CD8-positive, alpha-beta T cell (primary cell): ENCODE measurements at regions of chr7 and their contacts with region 1.

Region 1: DNA sequence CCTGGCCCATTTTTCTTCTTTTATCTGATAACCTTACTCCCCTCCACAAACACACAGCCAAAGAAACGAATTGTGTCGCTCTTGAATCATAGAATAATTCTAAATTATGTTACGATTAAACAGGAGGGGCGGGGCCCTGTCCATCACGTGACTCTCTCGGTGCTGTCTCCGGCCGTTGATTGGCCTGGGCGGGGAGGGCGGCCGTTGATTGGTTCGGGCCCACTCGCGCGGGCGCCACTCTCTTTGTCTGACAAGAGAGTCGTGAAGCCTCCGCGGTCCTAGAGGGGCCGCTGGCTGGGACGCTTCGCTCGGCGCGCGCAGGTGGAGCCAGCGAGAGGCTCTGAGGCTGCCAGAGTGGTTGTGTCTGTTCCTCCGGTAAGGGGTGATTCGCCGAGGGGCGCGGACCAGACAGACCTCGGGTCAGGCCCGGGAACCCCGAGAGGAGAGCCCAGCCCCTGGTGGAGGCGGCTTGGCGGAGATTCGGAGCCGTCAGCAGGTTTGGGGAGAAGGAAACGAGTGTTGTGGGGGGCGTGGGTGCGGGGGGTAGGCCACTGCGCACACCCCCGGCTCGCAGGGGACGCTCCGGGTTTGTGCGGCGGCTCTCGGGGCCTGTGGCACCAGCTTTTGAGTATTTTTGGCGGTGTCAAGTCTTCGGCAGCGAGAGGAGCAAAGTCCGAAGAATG is at the start of gene ZNF789:
- DNase-seq: peak; percentile 96 to 99 (median 98)
- ATAC-seq: peak; percentile 97
- H3K4me3 ChIP-seq: peak within 1 kb of the TSS; percentile 75 to 93
- H3K4me3 Mint-ChIP-seq: peak within 1 kb of the TSS; percentile 98
- H3K27ac ChIP-seq: peak within 1 kb of the TSS; percentile 60 to 88
- H3K27ac Mint-ChIP-seq: peak within 1 kb of the TSS; percentile 96
- H3K4me1 ChIP-seq: peaks cover 19% of the 10 kb centered on the region
- H3K4me1 Mint-ChIP-seq: peaks cover 36% of the 10 kb centered on the region
- H3K27me3 ChIP-seq: no peaks in the 10 kb centered on the region
- H3K27me3 Mint-ChIP-seq: no peaks in the 10 kb centered on the region
- CTCF ChIP-seq: no peak
- total RNA-seq, gene ZNF789: 12.9 to 14.1 TPM

Region 2: GRCh38 chr7:98981701-98982100 is 491.0 kb before region 1 on chr7:
- CTCF ChIA-PET with region 1: no interaction called
- POLR2A ChIA-PET with region 1: no interaction called
- intact Hi-C with region 1: no loop called
- DNase-seq: no peak
- ATAC-seq: no peak
- H3K4me3 ChIP-seq: no peak overlapping the region
- H3K4me3 Mint-ChIP-seq: no peak overlapping the region
- H3K27ac ChIP-seq: no peak overlapping the region
- H3K27ac Mint-ChIP-seq: no peak overlapping the region
- H3K4me1 ChIP-seq: no peaks in the 10 kb centered on the region
- H3K4me1 Mint-ChIP-seq: no peaks in the 10 kb centered on the region
- H3K27me3 ChIP-seq: no peaks in the 10 kb centered on the region
- H3K27me3 Mint-ChIP-seq: no peaks in the 10 kb centered on the region
- CTCF ChIP-seq: no peak

Region 3: DNA sequence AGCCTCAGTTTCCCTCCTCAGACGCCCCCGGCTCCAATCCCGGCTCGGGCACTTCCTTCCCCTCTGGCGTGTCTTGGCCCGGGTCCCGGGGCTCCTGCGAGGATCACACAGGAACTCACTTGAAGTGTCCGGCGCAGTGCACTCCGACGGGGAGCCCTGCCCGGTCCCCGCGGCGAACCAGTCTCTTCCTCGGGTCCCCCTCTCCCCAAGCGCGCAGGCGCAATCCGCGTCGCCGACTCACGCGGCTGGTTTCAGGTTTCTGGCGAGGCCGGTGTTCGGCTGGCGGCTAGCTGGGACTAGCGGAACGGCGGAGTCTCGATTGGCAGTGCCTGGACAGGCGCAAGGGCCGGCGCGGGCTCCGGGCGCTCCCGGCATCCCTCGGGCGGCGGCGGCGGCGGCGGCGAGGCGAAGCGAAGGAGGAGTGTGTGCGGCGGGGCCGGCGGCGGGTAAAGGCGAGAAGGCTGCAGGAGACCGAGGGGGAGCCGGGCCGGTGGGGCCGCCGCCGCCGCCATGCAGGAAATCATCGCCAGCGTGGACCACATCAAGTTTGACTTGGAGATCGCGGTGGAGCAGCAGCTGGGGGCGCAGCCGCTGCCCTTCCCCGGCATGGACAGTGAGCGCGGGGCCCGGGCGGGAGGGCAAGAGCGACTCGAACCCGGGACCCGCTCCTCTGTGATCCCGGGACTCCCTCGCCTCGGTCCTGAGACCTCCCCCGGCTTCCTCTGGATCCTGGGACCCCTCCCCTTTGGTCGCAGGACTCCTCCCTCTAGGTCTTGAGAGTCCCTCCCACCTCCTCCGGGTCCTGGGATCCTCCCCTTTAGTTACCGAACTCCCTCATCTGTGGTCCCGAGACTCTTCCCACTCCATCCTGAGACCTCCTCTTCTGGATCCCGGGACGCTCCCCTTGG is 33.9 kb before region 1 on chr7 and contains the starts of genes CPSF4 and PTCD1:
- CTCF ChIA-PET with region 1: no interaction called
- POLR2A ChIA-PET with region 1: no interaction called
- intact Hi-C with region 1: loop called (anchors 1 to 2 kb)
- DNase-seq: peak; percentile 75 to 93 (median 88)
- ATAC-seq: peak; percentile 78
- H3K4me3 ChIP-seq: peak within 1 kb of the TSS; percentile 66 to 98
- H3K4me3 Mint-ChIP-seq: peak within 1 kb of the TSS; percentile 94
- H3K27ac ChIP-seq: peak within 1 kb of the TSS; percentile 63 to 82
- H3K27ac Mint-ChIP-seq: peak within 1 kb of the TSS; percentile 89
- H3K4me1 ChIP-seq: peaks cover 16% of the 10 kb centered on the region
- H3K4me1 Mint-ChIP-seq: peaks cover 33% of the 10 kb centered on the region
- H3K27me3 ChIP-seq: no peaks in the 10 kb centered on the region
- H3K27me3 Mint-ChIP-seq: no peaks in the 10 kb centered on the region
- CTCF ChIP-seq: no peak
- total RNA-seq, gene CPSF4: 33.4 to 33.9 TPM
- total RNA-seq, gene PTCD1: 4.2 to 4.5 TPM

Region 4: GRCh38 chr7:99551767-99552463 is 79.2 kb after region 1 on chr7 and contains the start of gene FAM200A:
- CTCF ChIA-PET with region 1: no interaction called
- POLR2A ChIA-PET with region 1: interaction called, 3 read pairs
- intact Hi-C with region 1: loop called in 1 of 2 experiments (anchors 1 kb)
- DNase-seq: peak; percentile 70 to 96 (median 87)
- ATAC-seq: peak; percentile 97
- H3K4me3 ChIP-seq: peak within 1 kb of the TSS; percentile 84 to 99
- H3K4me3 Mint-ChIP-seq: peak within 1 kb of the TSS; percentile 90
- H3K27ac ChIP-seq: peak within 1 kb of the TSS; percentile 91 to 99
- H3K27ac Mint-ChIP-seq: peak within 1 kb of the TSS; percentile 96
- H3K4me1 ChIP-seq: peaks cover 27% of the 10 kb centered on the region
- H3K4me1 Mint-ChIP-seq: peaks cover 39% of the 10 kb centered on the region
- H3K27me3 ChIP-seq: no peaks in the 10 kb centered on the region
- H3K27me3 Mint-ChIP-seq: no peaks in the 10 kb centered on the region
- CTCF ChIP-seq: no peak
- total RNA-seq, gene FAM200A: 2.7 to 3.3 TPM

Region 5: DNA sequence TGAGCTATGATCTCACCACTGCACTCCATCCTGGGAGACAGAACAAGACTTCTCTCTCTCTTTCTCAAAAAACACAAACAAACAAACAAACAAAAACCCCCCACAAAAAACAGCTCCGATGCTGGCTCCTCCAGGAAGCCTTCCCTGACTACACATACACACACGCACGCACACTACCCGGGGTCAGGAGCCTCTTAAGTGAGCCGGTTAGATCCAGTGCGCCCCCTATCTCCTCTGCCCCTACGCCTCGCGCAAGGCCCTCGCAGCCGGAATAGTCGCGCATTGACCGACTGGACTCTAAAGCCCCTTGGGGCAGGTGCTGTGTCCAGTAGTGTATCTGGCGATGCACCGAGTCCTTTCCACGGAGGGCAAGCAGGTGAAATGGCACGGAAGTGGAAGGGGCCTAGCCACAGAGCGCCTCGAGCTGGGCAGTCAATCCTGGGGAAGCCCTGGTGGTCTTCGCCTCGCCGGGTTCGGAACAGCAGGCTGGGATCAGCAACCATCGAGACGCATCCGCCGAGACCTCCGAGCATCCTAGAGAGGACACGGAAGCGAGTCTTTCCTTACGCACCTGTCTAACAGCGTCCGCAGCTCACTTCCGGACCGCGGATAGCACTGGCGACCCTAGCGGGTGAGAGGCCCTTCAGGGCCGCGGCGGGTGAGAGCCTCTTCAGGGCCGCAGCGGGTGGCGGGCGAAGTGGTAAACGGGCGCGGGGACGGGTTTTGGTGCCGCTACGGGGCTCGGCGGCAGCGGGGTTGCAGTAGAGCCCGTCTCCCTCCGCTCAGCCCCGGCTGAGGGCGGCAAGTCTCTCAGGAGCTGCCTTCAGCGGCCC is 143.9 kb after region 1 on chr7 and contains the start of gene ZSCAN25:
- CTCF ChIA-PET with region 1: no interaction called
- POLR2A ChIA-PET with region 1: no interaction called
- intact Hi-C with region 1: loop called in 1 of 2 experiments (anchors 1 kb)
- DNase-seq: peak; percentile 66 to 93 (median 86)
- ATAC-seq: peak; percentile 97
- H3K4me3 ChIP-seq: peak within 1 kb of the TSS; percentile 78 to 94
- H3K4me3 Mint-ChIP-seq: peak within 1 kb of the TSS; percentile 97
- H3K27ac ChIP-seq: peak within 1 kb of the TSS; percentile 86 to 87
- H3K27ac Mint-ChIP-seq: peak within 1 kb of the TSS; percentile 98
- H3K4me1 ChIP-seq: peaks cover 25% of the 10 kb centered on the region
- H3K4me1 Mint-ChIP-seq: peaks cover 45% of the 10 kb centered on the region
- H3K27me3 ChIP-seq: no peaks in the 10 kb centered on the region
- H3K27me3 Mint-ChIP-seq: no peaks in the 10 kb centered on the region
- CTCF ChIP-seq: no peak
- total RNA-seq, gene ZSCAN25: 54.1 to 54.7 TPM